SK-N-SH (cell line): ENCODE measurements at regions of chr17 and their contacts with region 1.

Region 1: DNA sequence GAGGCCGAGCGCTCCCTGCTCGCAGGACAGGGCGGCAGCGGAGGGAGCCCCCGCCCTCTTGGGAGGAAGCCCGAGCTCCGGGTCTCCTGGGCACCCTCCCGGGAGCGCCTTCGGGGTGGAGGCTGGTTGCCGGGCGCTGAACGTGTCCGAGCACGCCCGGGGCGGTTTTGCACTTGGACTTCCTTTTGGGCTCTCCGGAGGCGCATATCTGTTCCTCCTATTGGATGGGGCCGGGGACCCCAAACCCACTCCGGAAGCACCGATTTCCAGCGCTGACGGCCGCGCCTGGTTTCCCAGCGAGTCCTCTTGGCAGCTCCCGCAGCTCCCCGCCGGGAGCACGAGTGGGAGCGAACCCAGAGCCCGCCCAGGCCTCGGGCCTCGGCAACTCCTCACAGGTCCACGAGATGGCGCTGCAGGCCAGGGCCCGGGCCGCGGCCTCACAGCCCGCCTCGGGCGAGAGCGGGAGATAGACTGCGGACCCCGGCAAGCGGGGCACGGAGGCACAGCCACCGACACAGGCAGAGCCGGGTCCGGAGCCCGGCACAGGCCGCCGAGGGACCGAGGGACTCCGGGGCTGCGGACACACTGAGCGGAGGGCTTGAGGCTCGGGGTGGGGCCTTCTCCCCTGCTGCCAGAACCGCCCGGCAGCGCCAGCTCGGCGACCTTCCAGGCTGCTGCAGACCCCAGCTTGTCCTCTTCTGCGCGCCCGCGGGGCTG is 12.7 kb downstream of the TBX2 start:
- DNase-seq: peak; percentile 99
- H3K4me3 ChIP-seq: peak overlapping the region; percentile 77 to 82
- H3K27ac ChIP-seq: peak overlapping the region; percentile 80 to 90
- H3K4me1 ChIP-seq: peaks cover 5 to 51% of the 10 kb centered on the region in 2 experiments; a peak in 2 of 4 replicates
- H3K27me3 ChIP-seq: no peaks in the 10 kb centered on the region
- CTCF ChIP-seq: peak; percentile 98
- EP300 ChIP-seq: no peak; a peak in 1 of 4 replicates
- RAD21 ChIP-seq: peak; percentile 96

Region 2: GRCh38 chr17:60971515-60972369 is 440.6 kb before region 1 on chr17:
- CTCF ChIA-PET with region 1: interaction called, 27 read pairs
- POLR2A ChIA-PET with region 1: interaction called, 4 read pairs
- DNase-seq: peak; percentile 71
- H3K4me3 ChIP-seq: peak overlapping the region in 1 of 2 experiments; percentile 8; a peak in 1 of 4 replicates
- H3K27ac ChIP-seq: no peak overlapping the region
- H3K4me1 ChIP-seq: no peaks in the 10 kb centered on the region
- H3K27me3 ChIP-seq: no peaks in the 10 kb centered on the region
- CTCF ChIP-seq: peak; percentile 79
- EP300 ChIP-seq: no peak
- RAD21 ChIP-seq: peak; percentile 97

Region 3: DNA sequence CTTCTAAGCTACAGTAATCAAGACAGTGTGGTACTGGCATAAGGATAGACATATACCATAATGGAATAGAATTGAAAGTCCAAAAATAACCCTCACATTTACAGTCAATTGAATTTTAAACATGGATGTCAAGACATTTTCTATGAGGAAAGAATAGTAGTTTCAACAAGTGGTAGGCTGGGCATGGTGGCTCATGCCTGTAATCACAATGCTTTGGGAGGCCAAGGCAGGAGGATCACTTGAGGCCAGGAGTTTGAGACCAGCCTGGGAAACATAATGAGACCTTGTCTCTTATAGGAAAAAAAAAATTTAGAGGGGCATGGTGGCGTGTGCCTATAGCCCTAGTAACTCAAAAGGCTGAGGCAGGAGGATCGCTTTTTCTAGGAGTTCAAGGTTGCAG is 135.5 kb before region 1 on chr17:
- CTCF ChIA-PET with region 1: no interaction called
- POLR2A ChIA-PET with region 1: no interaction called
- DNase-seq: no peak
- H3K4me3 ChIP-seq: no peak overlapping the region
- H3K27ac ChIP-seq: no peak overlapping the region
- H3K4me1 ChIP-seq: peaks cover 0 to 10% of the 10 kb centered on the region in 2 experiments; a peak in 2 of 4 replicates
- H3K27me3 ChIP-seq: no peaks in the 10 kb centered on the region
- CTCF ChIP-seq: no peak
- EP300 ChIP-seq: no peak
- RAD21 ChIP-seq: no peak

Region 4: DNA sequence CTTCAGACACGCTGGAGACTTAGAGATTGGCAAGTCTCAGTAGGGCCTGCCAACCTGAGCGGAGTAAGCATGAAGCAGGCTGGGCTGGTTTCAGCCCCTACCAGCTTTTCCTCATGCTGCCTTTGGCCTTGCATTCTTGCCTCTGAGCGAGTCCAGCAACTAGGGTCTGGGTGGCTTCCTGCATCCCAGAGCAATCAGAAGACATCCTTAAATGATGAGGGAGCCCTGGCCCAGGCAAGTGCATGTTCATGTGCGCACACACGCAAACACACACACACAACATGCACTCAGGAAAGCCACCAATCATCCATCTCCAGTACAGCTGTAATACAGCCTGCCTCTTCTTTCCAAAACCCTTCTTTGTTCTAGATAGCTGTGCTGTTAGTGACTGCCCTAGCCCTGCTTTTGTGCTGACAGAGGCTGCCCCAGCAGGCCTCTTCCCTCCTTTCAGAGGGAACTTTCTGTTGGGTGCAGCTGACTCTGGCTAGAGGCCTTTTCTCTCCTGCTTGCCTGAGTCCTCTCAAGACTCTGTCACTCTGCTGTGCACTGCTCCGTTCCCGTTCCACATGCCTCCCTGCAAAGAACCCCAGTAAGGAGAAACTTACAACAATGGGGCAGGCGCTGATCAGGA is 43.4 kb before region 1 on chr17:
- CTCF ChIA-PET with region 1: no interaction called
- POLR2A ChIA-PET with region 1: no interaction called
- DNase-seq: no peak
- H3K4me3 ChIP-seq: no peak overlapping the region
- H3K27ac ChIP-seq: no peak overlapping the region
- H3K4me1 ChIP-seq: peaks cover 0 to 10% of the 10 kb centered on the region in 2 experiments; a peak in 1 of 4 replicates
- H3K27me3 ChIP-seq: no peaks in the 10 kb centered on the region
- CTCF ChIP-seq: no peak
- EP300 ChIP-seq: no peak
- RAD21 ChIP-seq: no peak

Region 5: DNA sequence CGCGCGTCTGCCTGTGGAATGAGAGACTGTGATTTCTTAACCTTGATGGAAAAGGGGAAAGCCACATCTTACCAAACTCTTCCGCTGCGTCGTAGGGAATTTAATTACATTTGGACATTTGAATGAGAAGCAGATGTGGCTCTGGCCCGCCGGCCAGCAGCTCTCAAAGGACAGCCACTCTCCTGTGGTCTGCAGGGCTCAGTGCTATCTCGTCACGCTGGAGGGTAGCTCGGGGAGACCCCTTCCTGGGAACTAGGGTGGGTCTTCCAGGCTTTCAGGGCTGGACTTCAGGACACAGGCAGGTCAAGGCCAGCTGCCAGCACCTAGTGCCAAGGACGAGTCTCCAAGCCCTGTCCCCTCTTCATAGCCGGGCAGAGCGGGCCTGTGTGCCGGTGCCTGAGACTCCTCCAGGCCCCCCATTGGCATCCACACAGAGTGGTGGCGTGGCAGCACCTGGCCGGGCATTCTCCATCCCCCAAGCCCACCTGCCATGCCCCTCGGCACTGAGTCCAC is 28.6 kb before region 1 on chr17:
- CTCF ChIA-PET with region 1: interaction called, 18 read pairs
- POLR2A ChIA-PET with region 1: interaction called, 9 read pairs
- DNase-seq: peak; percentile 81
- H3K4me3 ChIP-seq: no peak overlapping the region
- H3K27ac ChIP-seq: peak overlapping the region; percentile 34 to 97; a peak in 3 of 4 replicates
- H3K4me1 ChIP-seq: peaks cover 0 to 94% of the 10 kb centered on the region in 2 experiments; a peak in 3 of 4 replicates
- H3K27me3 ChIP-seq: no peaks in the 10 kb centered on the region
- CTCF ChIP-seq: no peak
- EP300 ChIP-seq: peak in 1 of 2 experiments; percentile 92; a peak in 3 of 4 replicates
- RAD21 ChIP-seq: peak; percentile 39

Region 6: DNA sequence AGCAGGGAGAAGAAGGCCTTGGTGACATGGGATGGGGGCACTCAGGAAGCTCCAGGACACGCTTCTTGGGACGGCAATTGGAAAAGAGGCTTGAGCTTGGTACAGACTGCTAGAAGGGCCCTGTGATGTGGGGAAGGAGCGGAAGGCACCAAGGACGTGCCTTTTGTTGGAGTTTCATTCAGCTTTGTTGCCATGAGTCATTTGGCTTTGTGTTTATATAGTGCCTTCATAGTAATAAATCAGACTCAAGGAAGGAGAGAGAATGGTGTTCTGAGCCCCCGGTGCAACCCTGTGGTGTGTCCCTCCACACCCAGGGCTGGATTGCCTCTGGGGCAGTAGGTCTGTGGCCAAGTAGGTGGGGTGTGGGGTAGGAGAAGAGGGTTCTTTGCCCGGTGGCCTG is 32.5 kb after region 1 on chr17:
- CTCF ChIA-PET with region 1: interaction called, 12 read pairs
- POLR2A ChIA-PET with region 1: no interaction called
- DNase-seq: no peak
- H3K4me3 ChIP-seq: no peak overlapping the region
- H3K27ac ChIP-seq: no peak overlapping the region
- H3K4me1 ChIP-seq: no peaks in the 10 kb centered on the region; a peak in 1 of 4 replicates
- H3K27me3 ChIP-seq: no peaks in the 10 kb centered on the region
- CTCF ChIP-seq: no peak
- EP300 ChIP-seq: no peak
- RAD21 ChIP-seq: no peak

Region 7: DNA sequence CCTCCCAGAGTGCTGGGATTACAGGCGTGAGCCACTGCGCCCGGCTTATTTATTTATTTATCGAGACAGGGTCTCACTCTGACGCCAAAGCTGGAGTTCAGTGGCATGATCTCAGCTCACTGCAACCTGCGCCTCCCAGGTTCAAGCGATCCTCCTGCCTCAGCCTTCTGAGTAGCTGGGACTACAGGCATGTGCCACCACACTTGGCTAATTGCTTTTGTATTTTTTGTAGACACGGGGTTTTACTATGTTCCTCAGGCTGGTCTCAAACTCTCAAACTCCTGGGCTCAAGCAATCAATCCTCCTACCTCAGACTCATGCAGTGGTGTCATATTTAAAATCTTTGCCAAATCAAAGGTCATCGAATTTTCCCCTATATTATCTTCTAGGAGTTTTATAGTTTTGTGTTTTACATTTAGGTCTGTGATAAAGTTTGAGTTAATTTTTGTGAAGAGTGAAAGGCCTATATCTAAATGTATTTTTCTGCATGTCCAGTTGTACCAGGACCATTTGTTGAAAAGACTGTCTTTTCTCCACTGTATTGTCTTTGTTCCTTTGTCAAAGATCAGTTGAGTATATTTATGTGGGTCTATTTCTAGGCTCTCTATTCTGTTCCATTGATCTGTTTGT is 131.6 kb after region 1 on chr17:
- CTCF ChIA-PET with region 1: interaction called, 16 read pairs
- POLR2A ChIA-PET with region 1: no interaction called
- DNase-seq: no peak
- H3K4me3 ChIP-seq: no peak overlapping the region
- H3K27ac ChIP-seq: no peak overlapping the region
- H3K4me1 ChIP-seq: no peaks in the 10 kb centered on the region
- H3K27me3 ChIP-seq: no peaks in the 10 kb centered on the region
- CTCF ChIP-seq: no peak
- EP300 ChIP-seq: no peak
- RAD21 ChIP-seq: no peak

Region 8: GRCh38 chr17:61583242-61583641 is 170.9 kb after region 1 on chr17:
- CTCF ChIA-PET with region 1: interaction called, 177 read pairs
- POLR2A ChIA-PET with region 1: interaction called, 6 read pairs
- DNase-seq: peak; percentile 79
- H3K4me3 ChIP-seq: no peak overlapping the region
- H3K27ac ChIP-seq: peak overlapping the region in 1 of 2 experiments; percentile 76; a peak in 1 of 4 replicates
- H3K4me1 ChIP-seq: peaks cover 13 to 26% of the 10 kb centered on the region in 2 experiments; a peak in 3 of 4 replicates
- H3K27me3 ChIP-seq: no peaks in the 10 kb centered on the region
- CTCF ChIP-seq: peak; percentile 70
- EP300 ChIP-seq: peak in 1 of 2 experiments; percentile 85; a peak in 3 of 4 replicates
- RAD21 ChIP-seq: peak; percentile 76